Left ventricle myocardium superior (tissue), 1 donor: ENCODE measurements at regions of chr2 and their contacts with region 1.

Region 1: DNA sequence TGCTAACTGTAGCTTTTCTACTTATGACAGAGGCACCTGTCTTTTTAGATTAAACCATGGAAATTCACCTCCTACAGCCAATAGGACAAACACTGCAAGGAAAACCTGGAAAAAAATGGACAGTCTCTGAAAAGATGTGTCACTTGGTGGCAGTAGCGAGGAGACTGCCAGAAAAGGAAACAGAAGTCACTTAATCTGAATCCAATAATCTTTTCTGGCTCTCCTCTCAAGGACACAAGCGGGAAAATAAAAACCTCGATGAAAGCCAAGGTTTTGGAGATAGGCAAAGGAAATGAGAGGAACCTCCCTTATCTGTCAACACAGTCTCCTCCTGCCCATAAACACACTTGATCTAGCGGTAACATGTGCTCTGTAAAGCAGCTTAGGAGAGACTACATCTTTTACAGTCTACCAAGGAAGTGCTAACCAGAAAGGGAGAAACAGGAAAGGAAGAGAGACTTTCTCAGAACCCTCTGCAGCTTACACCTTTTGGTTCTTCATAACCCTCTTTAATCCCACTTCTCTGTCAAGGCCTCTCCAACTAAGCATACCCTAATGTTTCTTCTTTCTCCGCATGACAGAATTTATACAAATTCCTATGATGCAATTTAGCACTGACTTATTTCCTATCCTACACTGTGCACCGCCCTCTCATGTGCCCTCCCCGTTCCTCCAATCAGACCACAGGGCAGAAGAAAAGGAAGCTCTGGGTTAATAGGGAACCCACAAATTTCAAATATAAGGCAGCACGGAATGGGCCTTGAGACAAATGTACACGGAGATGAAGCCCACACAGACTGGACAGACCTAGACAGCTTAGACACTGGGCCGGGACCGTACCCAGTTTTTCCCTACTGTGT is 52.8 kb downstream of the CLASP1 start:
- DNase-seq: no peak
- ATAC-seq: peak; percentile 77

Region 2: DNA sequence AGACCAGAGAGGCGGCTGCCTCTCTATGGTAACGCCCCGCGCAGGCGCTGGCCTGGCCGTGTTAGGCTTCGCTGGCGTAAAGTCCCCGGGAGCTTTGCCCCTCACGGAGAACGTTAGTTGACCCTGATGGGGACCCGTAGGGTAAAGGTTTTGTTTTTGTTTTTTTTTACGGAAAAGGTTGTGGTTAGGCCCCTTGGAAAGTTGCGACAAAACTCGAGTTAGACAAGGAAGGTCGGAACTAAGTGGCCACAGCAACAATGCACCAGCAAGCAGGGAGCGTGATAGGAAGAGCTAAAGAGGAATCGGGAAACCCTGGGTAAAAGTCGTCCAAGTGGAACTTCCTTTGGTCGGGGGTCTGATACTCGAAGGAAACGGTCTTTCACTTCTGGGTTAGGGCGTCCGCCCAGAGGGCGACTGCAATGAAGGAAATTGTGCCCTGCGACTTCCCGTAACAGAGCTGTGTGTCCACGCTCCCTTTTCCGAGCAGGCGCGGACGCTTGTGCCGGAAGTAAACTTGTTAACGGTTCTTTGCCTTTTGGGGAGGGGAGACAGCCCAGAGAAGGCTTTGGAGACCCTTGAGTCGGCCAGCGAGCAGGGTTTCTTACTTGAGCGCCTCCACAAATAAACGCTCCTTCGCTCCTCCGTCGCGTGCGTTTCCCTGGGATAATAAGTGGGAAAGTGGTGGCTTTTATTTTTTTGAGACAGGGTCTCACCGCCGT is 53.3 kb after region 1 on chr2:
- intact Hi-C with region 1: loop called (anchors 10 kb)
- DNase-seq: peak; percentile 98
- ATAC-seq: peak; percentile 97

Region 3: DNA sequence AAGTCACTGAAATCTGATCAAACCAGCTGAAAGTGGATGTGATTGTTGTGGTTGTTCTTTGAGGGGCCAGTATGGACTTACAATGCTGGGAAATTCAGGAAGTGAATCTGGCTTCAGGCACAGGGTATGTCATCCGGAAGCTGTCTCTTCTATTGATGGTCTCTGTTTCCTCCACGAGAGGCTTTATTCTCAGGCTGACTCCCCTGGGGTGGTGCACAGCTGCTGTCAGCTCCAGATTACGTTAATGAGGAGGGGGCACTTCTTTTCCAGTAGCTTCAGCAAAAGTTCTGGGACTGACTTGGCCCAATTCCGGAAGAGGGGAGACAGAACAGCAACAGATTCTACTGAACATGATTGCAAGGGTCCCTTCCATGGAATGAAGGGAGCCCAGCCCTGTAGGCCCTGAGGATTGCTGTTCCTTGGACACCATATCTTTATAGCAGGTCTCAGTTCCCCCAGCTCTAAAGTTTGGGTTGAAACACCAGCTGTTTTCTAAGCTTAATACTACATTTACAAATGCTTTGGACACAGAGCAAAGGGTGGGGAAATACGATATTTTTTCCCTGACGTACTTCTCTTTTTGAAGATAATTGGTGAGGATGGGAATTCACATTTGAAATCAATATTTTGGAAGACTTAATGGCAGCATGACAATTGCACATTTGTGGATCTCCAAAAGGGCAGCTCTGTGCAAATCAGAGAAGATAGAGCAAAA is 559.9 kb after region 1 on chr2:
- intact Hi-C with region 1: no loop called
- DNase-seq: no peak
- ATAC-seq: no peak